Colonic mucosa (tissue), 4 donors: ENCODE measurements at regions of chr3 and their contacts with region 1.

Region 1: DNA sequence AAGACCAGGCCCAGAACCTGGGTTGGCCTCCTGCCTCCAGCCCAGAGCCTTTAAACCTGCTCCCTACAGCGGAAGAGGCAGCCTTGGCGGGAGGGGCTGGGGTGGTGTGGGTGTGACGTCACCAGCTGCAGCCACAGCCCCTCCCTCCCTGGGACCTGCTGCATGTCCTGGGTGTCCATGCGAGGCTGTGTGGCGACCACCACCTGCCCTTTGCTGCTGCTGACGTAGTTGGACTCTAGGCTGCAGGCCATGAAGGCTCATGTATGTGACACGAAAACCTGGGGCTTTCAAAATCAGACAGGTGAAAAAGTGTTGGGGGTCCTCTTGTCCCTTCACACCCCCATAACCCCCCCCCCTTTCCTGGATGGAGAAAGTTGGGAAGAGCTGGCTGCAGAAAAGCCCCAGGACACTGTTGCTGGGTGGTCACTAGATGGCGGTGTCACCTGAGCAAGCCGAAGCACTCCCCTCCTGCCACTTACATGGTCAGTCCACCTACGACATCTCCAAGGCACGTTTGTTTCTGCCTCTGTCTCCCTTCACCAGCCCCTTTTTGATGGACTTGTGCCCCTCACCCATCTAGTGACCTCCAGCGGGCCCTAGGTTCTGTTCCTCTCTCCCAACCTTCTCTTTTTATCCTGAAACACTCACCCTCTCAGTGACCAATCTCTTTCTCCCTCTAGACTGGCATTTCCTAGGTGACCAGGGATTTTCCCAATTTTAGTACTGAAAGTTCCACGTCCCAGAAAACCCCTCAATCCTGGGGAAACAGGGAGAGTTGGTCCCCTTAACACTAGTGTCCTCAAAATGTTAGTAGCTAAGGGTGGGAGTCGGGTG is 35.2 kb downstream of the SLC6A20 start:
- DNase-seq: peak; percentile 51
- H3K4me3 ChIP-seq: no peak overlapping the region
- H3K27ac ChIP-seq: no peak overlapping the region
- H3K4me1 ChIP-seq: no peaks in the 10 kb centered on the region
- H3K27me3 ChIP-seq: no peaks in the 10 kb centered on the region
- CTCF ChIP-seq: peak; percentile 71

Region 2: GRCh38 chr3:45244356-45244755 is 516.7 kb before region 1 on chr3:
- intact Hi-C with region 1: no loop called
- DNase-seq: no peak
- H3K4me3 ChIP-seq: no peak overlapping the region
- H3K27ac ChIP-seq: no peak overlapping the region
- H3K4me1 ChIP-seq: no peaks in the 10 kb centered on the region
- H3K27me3 ChIP-seq: no peaks in the 10 kb centered on the region
- CTCF ChIP-seq: no peak

Region 3: DNA sequence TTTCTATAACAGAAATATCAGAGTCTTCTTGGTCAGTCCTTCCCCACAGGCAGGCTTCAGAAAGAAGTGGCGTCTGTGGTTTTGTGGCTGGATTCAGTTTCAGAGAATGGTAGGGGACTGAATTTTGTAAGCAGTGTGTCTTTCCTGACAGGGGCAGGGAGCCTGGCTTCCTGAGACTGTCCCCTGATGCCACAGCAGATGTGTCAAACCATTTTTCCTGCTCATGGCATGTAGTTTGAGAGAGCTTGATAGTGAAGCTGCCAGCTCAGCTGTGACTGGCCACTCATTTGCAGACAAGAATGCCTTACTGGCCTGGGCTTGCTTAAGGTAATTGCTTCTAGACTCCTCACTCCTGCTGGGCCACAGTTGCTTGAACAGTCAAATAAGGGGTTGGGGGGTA is 346.3 kb before region 1 on chr3:
- intact Hi-C with region 1: no loop called
- DNase-seq: no peak
- H3K4me3 ChIP-seq: no peak overlapping the region
- H3K27ac ChIP-seq: no peak overlapping the region
- H3K4me1 ChIP-seq: peaks cover 23% of the 10 kb centered on the region
- H3K27me3 ChIP-seq: no peaks in the 10 kb centered on the region
- CTCF ChIP-seq: no peak

Region 4: GRCh38 chr3:45446706-45447105 is 314.4 kb before region 1 on chr3:
- intact Hi-C with region 1: no loop called
- DNase-seq: no peak
- H3K4me3 ChIP-seq: no peak overlapping the region
- H3K27ac ChIP-seq: no peak overlapping the region
- H3K4me1 ChIP-seq: no peaks in the 10 kb centered on the region
- H3K27me3 ChIP-seq: no peaks in the 10 kb centered on the region
- CTCF ChIP-seq: no peak

Region 5: GRCh38 chr3:45832691-45833090 is 71.6 kb after region 1 on chr3:
- intact Hi-C with region 1: loop called (anchors 2 kb)
- DNase-seq: no peak
- H3K4me3 ChIP-seq: no peak overlapping the region
- H3K27ac ChIP-seq: no peak overlapping the region
- H3K4me1 ChIP-seq: no peaks in the 10 kb centered on the region
- H3K27me3 ChIP-seq: no peaks in the 10 kb centered on the region
- CTCF ChIP-seq: no peak

Region 6: GRCh38 chr3:45929042-45929679 is 168.1 kb after region 1 on chr3:
- intact Hi-C with region 1: loop called (anchors 2 kb)
- DNase-seq: peak; percentile 46
- H3K4me3 ChIP-seq: no peak overlapping the region
- H3K27ac ChIP-seq: no peak overlapping the region
- H3K4me1 ChIP-seq: no peaks in the 10 kb centered on the region
- H3K27me3 ChIP-seq: no peaks in the 10 kb centered on the region
- CTCF ChIP-seq: peak; percentile 75

Region 7: DNA sequence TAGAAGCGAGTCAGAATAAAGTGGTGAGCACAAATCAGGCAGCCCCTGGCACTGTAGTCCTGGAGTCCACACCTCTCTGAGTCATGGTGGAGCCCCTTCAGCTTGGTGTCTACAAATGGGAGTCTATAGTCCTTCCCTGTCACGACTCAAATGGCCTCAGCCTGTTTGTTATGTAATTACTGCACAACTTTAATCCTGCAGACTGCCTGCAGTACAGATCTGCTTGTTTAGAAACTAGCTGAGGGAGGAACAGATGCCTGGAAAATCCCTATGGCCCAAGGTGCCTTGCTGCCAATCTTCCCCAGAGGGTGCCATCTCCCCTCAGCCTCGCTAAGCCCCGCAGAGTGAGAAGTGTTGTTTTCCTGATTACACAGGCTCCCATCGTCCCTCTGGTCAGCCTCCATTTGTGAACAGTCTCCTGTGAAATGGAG is 178.3 kb after region 1 on chr3:
- intact Hi-C with region 1: no loop called
- DNase-seq: no peak
- H3K4me3 ChIP-seq: no peak overlapping the region
- H3K27ac ChIP-seq: no peak overlapping the region
- H3K4me1 ChIP-seq: no peaks in the 10 kb centered on the region
- H3K27me3 ChIP-seq: no peaks in the 10 kb centered on the region
- CTCF ChIP-seq: no peak

Region 8: GRCh38 chr3:46078712-46079400 is 317.8 kb after region 1 on chr3:
- intact Hi-C with region 1: loop called (anchors 2 kb)
- DNase-seq: peak; percentile 96
- H3K4me3 ChIP-seq: no peak overlapping the region
- H3K27ac ChIP-seq: no peak overlapping the region
- H3K4me1 ChIP-seq: no peaks in the 10 kb centered on the region
- H3K27me3 ChIP-seq: no peaks in the 10 kb centered on the region
- CTCF ChIP-seq: peak; percentile 94